A673 (cell line): ENCODE measurements at regions of chr18 and their contacts with region 1.

Region 1: DNA sequence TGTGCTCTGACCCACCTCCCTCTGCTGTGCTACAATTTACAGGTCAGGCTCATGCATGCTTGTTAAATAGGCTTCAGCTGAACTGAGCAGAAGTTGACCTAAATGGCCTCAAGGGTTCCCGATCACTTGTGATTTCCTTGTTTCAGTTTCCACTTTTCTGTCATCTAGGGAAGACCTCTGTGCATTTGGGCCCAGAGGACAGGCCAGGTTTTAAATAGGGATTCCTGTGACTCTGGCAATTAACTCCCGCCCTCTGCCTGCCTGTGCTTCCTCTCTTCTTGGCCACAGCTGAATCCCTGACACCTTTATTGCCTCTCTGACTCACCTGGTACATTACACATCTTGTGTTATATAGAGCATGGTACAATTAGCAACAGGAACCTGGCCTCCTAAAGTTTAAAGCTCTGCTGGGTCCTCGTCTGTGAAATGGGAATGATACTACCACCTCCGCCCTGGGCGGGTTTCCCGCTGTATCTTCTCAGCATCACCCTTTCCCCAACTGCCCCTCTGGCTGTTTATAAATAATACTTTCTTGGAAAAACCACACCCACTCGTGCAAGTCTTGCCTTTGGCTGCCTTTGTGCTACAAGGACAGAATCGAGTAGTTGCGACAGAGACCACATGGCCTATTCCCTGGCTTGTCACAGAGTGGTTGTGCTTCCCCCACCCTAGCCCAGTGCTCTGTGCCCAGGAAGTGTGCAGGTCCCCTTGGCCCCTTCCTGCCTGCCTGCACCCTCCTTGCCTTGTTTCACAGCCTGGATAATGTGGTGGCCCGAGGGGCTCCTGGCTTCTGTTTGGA is 7.9 kb downstream of the CABLES1 start:
- DNase-seq: no peak
- H3K4me3 ChIP-seq: no peak overlapping the region
- H3K27ac ChIP-seq: no peak overlapping the region
- H3K4me1 ChIP-seq: peaks cover 15% of the 10 kb centered on the region
- H3K27me3 ChIP-seq: no peaks in the 10 kb centered on the region
- CTCF ChIP-seq: no peak

Region 2: DNA sequence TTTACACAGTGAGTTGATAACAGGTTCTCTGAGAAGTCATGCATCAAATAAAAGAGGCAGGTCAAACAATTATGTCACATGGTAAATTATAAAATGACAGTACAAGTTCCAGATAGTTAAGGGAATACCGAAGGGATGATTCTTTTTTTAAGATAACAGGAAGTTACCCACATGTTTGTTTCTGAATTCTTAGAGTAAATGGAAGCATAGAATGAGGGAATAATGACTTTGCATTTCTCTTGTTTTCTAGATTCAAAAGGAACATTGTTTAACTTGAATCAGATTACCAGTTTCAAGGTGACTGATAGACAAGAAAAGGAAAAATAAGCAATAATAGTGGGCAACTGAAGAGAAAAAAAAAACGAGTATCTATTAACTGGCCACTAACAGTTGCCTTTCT is 1278.2 kb before region 1 on chr18:
- CTCF ChIA-PET with region 1: no interaction called
- POLR2A ChIA-PET with region 1: no interaction called
- intact Hi-C with region 1: no loop called
- DNase-seq: no peak
- H3K4me3 ChIP-seq: no peak overlapping the region
- H3K27ac ChIP-seq: no peak overlapping the region
- H3K4me1 ChIP-seq: peaks cover 9% of the 10 kb centered on the region
- H3K27me3 ChIP-seq: no peaks in the 10 kb centered on the region
- CTCF ChIP-seq: no peak

Region 3: DNA sequence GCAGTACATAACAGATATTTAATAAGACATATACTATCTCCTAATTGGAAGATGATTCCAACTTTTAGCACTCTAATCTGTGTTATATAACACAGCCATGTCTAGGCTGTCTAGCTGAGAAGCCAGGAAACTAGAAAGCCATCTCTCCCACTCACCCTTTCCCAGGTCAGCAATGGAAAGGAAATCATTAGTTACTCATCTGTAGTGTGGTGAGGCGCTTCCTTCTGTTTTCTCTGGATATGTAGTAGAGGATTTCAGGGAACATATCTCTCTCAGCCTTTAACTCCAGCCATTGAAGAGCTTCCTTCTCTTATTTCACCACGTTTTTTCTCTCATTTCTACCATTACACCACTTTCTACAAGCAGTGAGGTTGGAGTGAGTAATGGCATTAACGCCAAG is 190.7 kb before region 1 on chr18:
- CTCF ChIA-PET with region 1: no interaction called
- POLR2A ChIA-PET with region 1: no interaction called
- intact Hi-C with region 1: no loop called
- DNase-seq: no peak
- H3K4me3 ChIP-seq: no peak overlapping the region
- H3K27ac ChIP-seq: no peak overlapping the region
- H3K4me1 ChIP-seq: no peaks in the 10 kb centered on the region
- H3K27me3 ChIP-seq: no peaks in the 10 kb centered on the region
- CTCF ChIP-seq: no peak

Region 4: GRCh38 chr18:23053776-23054457 is 89.3 kb before region 1 on chr18:
- CTCF ChIA-PET with region 1: no interaction called
- POLR2A ChIA-PET with region 1: no interaction called
- intact Hi-C with region 1: no loop called
- DNase-seq: peak; percentile 34
- H3K4me3 ChIP-seq: no peak overlapping the region
- H3K27ac ChIP-seq: no peak overlapping the region
- H3K4me1 ChIP-seq: no peaks in the 10 kb centered on the region
- H3K27me3 ChIP-seq: no peaks in the 10 kb centered on the region
- CTCF ChIP-seq: no peak

Region 5: GRCh38 chr18:23226930-23227725 is 83.9 kb after region 1 on chr18:
- CTCF ChIA-PET with region 1: no interaction called
- POLR2A ChIA-PET with region 1: no interaction called
- intact Hi-C with region 1: loop called (anchors 1 kb)
- DNase-seq: peak; percentile 56
- H3K4me3 ChIP-seq: no peak overlapping the region
- H3K27ac ChIP-seq: peak overlapping the region; percentile 4
- H3K4me1 ChIP-seq: peaks cover 47% of the 10 kb centered on the region
- H3K27me3 ChIP-seq: no peaks in the 10 kb centered on the region
- CTCF ChIP-seq: no peak

Region 6: DNA sequence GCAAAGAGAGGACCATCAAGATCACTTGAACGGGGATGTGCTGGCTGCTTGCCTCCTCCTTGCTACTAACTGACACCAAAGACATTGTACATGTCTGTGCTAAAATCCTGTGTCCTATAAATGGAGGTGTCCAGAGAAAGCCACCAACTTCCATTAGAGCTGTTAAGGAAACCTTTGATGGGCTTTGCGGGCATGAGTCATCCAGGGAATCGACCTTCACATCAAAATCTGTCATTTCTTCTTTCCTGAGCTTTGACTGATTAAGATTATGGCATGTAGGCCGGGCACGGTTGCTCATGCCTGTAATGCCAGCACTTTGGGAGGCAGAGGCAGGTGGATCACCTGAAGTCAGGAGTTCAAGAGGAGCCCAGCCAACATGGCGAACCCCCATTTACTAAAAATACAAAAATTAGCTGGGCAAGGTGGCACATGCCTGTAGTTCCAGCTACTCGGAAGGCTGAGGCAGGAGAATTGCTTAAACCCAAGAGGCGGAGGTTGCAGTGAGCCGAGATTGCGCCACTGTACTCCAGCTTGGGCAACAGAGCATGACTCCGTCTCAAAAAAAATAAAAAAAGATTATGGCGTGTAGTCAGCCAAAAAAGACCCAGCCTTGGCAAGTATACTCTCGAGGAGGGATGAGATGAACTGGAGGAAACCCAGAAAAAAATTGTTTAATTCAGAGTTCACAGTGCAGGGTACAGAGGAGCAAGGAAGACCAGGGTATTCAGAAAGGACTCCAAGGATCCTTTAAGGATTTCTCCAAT is 107.9 kb after region 1 on chr18:
- CTCF ChIA-PET with region 1: no interaction called
- POLR2A ChIA-PET with region 1: interaction called, 12 read pairs
- intact Hi-C with region 1: no loop called
- DNase-seq: no peak
- H3K4me3 ChIP-seq: no peak overlapping the region
- H3K27ac ChIP-seq: no peak overlapping the region
- H3K4me1 ChIP-seq: no peaks in the 10 kb centered on the region
- H3K27me3 ChIP-seq: no peaks in the 10 kb centered on the region
- CTCF ChIP-seq: no peak